A549 (cell line): ENCODE measurements at regions of chr11 and their contacts with region 1.

Region 1: DNA sequence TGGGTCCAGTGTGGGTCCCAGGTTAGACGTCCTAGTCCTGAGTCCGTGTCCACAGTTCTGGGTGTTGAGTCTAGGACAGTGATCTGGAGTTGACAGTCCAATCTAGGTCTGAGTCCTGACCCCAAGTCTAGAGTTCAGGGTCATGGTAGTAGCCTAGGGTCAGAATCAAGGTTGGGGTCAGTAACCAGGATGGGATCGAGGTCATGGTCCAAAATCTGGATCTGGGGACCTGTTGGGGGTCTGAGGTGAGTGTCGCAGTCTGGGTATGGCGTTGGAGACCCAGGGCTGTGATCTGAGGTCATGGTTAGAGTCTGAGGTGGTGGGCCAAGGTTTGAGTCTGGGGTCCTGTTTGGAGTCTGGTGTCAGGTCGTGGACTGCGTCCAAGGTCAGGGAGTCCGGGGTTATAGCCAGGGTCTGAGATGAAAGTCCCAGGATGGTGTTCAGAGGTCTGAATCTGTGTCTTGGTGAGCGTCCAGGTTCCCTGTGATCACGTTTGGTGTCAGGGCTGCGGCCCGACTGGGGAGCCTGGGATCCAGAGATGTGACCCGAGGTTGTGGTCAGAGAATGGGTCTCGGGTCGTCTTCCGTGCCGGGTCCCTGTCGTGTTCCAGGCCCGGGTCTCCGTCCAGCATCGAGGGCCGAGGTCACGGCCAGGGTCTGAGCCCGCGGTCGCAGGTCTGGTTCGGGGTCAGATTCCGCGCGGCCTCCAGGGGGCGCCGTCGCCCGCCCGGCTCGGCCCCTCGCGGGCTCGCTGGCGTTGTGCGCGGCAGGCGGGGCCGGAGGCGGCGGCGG is 445 bp upstream of the GRK2 start:
- DNase-seq: peak; percentile 55 to 76
- ATAC-seq: peak; percentile 60 to 69
- H3K4me3 ChIP-seq: peak overlapping the region; percentile 89; the same call in 2 of the 3 replicates
- H3K27ac ChIP-seq: peak overlapping the region; percentile 92 to 100; a peak in 5 of 6 replicates
- H3K4me1 ChIP-seq: peaks cover 40% of the 10 kb centered on the region
- CTCF ChIP-seq: peak; percentile 79
- EP300 ChIP-seq: no peak
- POLR2A ChIP-seq: no peak
- RAD21 ChIP-seq: peak; percentile 51 to 52; a peak in 3 of 5 replicates

Region 2: GRCh38 chr11:67239783-67240575 is 25.8 kb before region 1 on chr11:
- CTCF ChIA-PET with region 1: interaction called, 23 read pairs
- POLR2A ChIA-PET with region 1: interaction called, 6 read pairs
- DNase-seq: peak; percentile 93 to 97
- ATAC-seq: peak; percentile 96 to 98
- H3K4me3 ChIP-seq: peak overlapping the region; percentile 69
- H3K27ac ChIP-seq: peak overlapping the region; percentile 80 to 89
- H3K4me1 ChIP-seq: peaks cover 28% of the 10 kb centered on the region
- CTCF ChIP-seq: no peak
- EP300 ChIP-seq: no peak
- POLR2A ChIP-seq: peak; percentile 98
- RAD21 ChIP-seq: no peak

Region 3: DNA sequence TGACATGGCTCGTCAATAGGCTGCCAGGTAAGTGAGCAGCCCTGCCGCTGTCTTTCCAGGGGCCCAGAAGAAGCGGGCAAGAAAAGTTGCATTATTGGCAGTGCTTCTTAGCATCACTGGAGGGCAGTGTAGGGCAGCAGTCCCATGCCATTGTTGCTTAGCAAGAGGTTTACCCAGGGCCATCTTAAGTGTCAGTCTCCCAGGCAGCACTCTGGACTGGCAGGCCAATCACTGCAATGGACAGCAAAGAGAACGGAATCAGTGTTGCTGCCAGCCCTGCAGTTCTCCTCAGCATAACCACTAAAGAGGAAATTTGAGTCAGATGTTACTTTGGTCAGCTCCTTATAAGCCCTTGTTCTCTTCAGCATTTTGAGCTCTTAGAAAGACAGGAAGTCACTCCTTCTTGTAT is 13.0 kb before region 1 on chr11:
- CTCF ChIA-PET with region 1: interaction called, 90 read pairs
- POLR2A ChIA-PET with region 1: no interaction called
- DNase-seq: peak; percentile 49 to 80
- ATAC-seq: peak; percentile 75 to 82
- H3K4me3 ChIP-seq: no peak overlapping the region
- H3K27ac ChIP-seq: no peak overlapping the region
- H3K4me1 ChIP-seq: no peaks in the 10 kb centered on the region
- CTCF ChIP-seq: peak; percentile 40
- EP300 ChIP-seq: no peak
- POLR2A ChIP-seq: no peak
- RAD21 ChIP-seq: peak; percentile 37 to 50; a peak in 4 of 5 replicates

Region 4: GRCh38 chr11:67288452-67289225 is 22.8 kb after region 1 on chr11:
- CTCF ChIA-PET with region 1: interaction called, 27 read pairs
- POLR2A ChIA-PET with region 1: interaction called, 5 read pairs
- DNase-seq: peak; percentile 83 to 89
- ATAC-seq: peak; percentile 72 to 82
- H3K4me3 ChIP-seq: peak overlapping the region; percentile 65
- H3K27ac ChIP-seq: peak overlapping the region; percentile 95 to 98
- H3K4me1 ChIP-seq: peaks cover 19% of the 10 kb centered on the region
- CTCF ChIP-seq: peak; percentile 43
- EP300 ChIP-seq: no peak
- POLR2A ChIP-seq: peak; percentile 80
- RAD21 ChIP-seq: peak; percentile 14 to 30; a peak in 3 of 5 replicates

Region 5: GRCh38 chr11:67345920-67346799 is 80.3 kb after region 1 on chr11:
- CTCF ChIA-PET with region 1: interaction called, 23 read pairs
- POLR2A ChIA-PET with region 1: no interaction called
- DNase-seq: peak; percentile 83 to 97
- ATAC-seq: peak; percentile 84 to 90
- H3K4me3 ChIP-seq: no peak overlapping the region
- H3K27ac ChIP-seq: peak overlapping the region; percentile 65 to 82
- H3K4me1 ChIP-seq: peaks cover 62% of the 10 kb centered on the region
- CTCF ChIP-seq: peak; percentile 96
- EP300 ChIP-seq: peak; percentile 23 to 54; a peak in 1 of 5 replicates
- POLR2A ChIP-seq: no peak
- RAD21 ChIP-seq: peak; percentile 88

Region 6: GRCh38 chr11:67382276-67383136 is 116.7 kb after region 1 on chr11:
- CTCF ChIA-PET with region 1: interaction called, 51 read pairs
- POLR2A ChIA-PET with region 1: no interaction called
- DNase-seq: peak; percentile 74 to 83
- ATAC-seq: peak; percentile 63 to 65
- H3K4me3 ChIP-seq: no peak overlapping the region
- H3K27ac ChIP-seq: peak overlapping the region; percentile 95 to 100
- H3K4me1 ChIP-seq: peaks cover 82% of the 10 kb centered on the region
- CTCF ChIP-seq: peak; percentile 98
- EP300 ChIP-seq: no peak
- POLR2A ChIP-seq: no peak
- RAD21 ChIP-seq: peak; percentile 99 to 100